Mammary epithelial cell (primary cell): ENCODE measurements at regions of chr11 and their contacts with region 1.

Region 1: DNA sequence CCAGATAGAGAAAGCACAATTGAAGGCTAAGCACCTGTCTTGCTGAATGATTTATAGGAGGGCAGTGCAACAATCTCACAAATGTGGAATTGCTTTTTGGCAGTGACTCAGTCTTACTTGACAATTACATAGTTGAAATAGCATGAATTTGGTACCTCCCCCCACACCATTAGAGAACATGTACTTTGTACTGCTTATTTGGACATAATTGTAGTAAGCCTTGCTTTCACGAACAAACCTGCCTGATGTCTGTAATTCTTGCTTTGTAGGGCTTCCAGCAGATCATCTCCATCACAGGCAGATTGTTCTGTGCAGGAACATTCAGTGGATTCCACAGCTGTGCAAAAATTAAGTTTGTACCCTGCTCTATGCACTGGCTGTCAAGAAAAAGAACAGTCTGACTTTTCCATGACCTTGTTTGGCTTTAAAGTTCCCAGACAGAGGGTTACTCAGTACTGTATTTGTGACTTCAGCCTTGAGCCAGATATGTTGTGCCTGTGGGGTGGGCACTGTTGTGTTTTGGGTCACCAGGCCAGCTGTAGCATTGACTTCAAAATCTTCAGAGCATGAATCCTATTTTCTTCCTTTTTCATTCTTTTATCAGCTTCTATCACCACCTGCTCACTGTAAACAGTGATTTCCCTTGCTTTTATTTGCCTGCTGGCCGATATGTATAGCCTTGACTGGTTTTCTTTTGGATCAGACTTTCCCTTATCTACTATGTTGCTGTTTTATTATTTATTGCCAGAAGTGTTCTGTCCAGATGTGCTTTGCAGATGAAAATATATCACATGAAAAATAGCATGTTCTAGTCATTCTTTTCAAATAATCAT is 941.0 kb upstream of the CHORDC1 start:
- DNase-seq: peak; percentile 49
- H3K4me3 ChIP-seq: no peak overlapping the region
- H3K27ac ChIP-seq: no peak overlapping the region
- H3K4me1 ChIP-seq: peaks cover 28% of the 10 kb centered on the region
- H3K27me3 ChIP-seq: no peaks in the 10 kb centered on the region
- CTCF ChIP-seq: no peak

Region 2: DNA sequence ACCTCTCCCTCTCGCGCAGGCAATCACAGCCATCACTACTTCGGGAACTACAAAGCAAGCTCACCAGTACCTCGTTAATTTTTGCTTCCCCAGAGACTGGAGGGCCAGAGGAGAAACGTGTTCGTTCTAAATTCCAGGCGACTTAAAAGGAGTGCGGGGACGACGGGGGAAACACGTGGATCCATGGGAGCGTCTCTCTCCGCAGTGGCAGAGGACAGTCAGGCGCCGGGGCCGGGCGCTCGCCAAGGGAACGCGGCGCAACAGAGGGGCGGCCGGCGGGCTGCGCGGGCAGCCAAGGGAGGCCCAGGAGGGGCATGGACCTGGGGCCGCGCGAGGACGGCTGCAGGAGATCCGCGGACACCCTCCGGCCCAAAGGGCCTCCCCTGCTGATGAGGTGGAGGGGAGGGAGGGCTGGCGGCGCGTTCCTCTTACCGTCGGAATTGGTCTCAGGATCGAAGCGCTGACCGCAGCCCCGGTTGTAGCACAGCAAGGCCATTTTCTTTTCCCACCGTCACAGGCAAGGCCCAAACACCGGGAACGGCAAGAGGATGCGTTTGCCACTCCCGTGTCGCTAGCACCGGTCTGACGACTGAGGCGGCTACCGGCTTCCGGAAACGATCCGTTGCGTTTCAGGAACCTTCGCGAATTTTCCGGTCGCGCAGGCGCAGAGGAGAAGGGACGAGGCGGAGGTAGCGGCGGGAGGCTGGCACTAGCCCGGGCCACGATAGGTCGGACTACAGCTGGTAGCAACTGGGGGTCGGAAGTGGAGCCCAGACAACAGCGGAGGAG is 941.2 kb before region 1 on chr11 and contains the start of gene CHORDC1:
- CTCF ChIA-PET with region 1: no interaction called
- dilution Hi-C with region 1: no loop called
- in situ Hi-C with region 1: no loop called
- intact Hi-C with region 1: loop called (anchors 5 kb)
- DNase-seq: peak; percentile 85
- H3K4me3 ChIP-seq: peak within 1 kb of the TSS; percentile 81 to 88 (median 88)
- H3K27ac ChIP-seq: peak within 1 kb of the TSS; percentile 62
- H3K4me1 ChIP-seq: peaks cover 25% of the 10 kb centered on the region
- H3K27me3 ChIP-seq: no peaks in the 10 kb centered on the region
- CTCF ChIP-seq: no peak
- total RNA-seq, gene CHORDC1: 22.2 to 42.5 TPM

Region 3: GRCh38 chr11:90447618-90448017 is 716.2 kb before region 1 on chr11:
- CTCF ChIA-PET with region 1: no interaction called
- dilution Hi-C with region 1: no loop called
- in situ Hi-C with region 1: no loop called
- intact Hi-C with region 1: no loop called
- DNase-seq: no peak
- H3K4me3 ChIP-seq: no peak overlapping the region
- H3K27ac ChIP-seq: no peak overlapping the region
- H3K4me1 ChIP-seq: no peaks in the 10 kb centered on the region
- H3K27me3 ChIP-seq: no peaks in the 10 kb centered on the region
- CTCF ChIP-seq: no peak

Region 4: DNA sequence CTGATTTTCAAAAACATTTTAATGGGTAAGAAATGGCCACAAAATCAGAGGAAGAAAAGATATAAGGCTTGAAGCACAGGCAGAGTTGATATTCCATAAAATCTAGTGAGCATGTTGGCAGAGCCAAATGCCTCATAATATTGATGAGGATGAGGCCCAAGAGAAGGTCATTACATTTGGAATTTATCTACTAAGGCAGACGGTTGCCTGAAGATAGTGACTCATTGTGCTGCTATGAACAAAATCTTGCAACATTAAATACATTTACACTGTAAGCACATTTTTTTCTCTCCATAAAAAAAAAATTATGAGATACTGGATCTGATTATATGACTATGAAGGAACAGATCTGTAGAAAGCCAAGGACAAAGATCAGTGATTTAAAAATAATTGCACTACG is 59.6 kb before region 1 on chr11:
- CTCF ChIA-PET with region 1: no interaction called
- dilution Hi-C with region 1: no loop called
- in situ Hi-C with region 1: no loop called
- intact Hi-C with region 1: loop called (anchors 10 kb)
- DNase-seq: peak; percentile 58
- H3K4me3 ChIP-seq: no peak overlapping the region
- H3K27ac ChIP-seq: no peak overlapping the region
- H3K4me1 ChIP-seq: peaks cover 16% of the 10 kb centered on the region
- H3K27me3 ChIP-seq: no peaks in the 10 kb centered on the region
- CTCF ChIP-seq: no peak

Region 5: GRCh38 chr11:91124363-91124762 is 39.5 kb before region 1 on chr11:
- CTCF ChIA-PET with region 1: no interaction called
- dilution Hi-C with region 1: no loop called
- in situ Hi-C with region 1: no loop called
- intact Hi-C with region 1: no loop called
- DNase-seq: no peak
- H3K4me3 ChIP-seq: no peak overlapping the region
- H3K27ac ChIP-seq: no peak overlapping the region
- H3K4me1 ChIP-seq: no peaks in the 10 kb centered on the region
- H3K27me3 ChIP-seq: peaks cover 2% of the 10 kb centered on the region
- CTCF ChIP-seq: no peak